HEK293T (cell line): ENCODE measurements at regions of chr10 and their contacts with region 1.

Region 1: DNA sequence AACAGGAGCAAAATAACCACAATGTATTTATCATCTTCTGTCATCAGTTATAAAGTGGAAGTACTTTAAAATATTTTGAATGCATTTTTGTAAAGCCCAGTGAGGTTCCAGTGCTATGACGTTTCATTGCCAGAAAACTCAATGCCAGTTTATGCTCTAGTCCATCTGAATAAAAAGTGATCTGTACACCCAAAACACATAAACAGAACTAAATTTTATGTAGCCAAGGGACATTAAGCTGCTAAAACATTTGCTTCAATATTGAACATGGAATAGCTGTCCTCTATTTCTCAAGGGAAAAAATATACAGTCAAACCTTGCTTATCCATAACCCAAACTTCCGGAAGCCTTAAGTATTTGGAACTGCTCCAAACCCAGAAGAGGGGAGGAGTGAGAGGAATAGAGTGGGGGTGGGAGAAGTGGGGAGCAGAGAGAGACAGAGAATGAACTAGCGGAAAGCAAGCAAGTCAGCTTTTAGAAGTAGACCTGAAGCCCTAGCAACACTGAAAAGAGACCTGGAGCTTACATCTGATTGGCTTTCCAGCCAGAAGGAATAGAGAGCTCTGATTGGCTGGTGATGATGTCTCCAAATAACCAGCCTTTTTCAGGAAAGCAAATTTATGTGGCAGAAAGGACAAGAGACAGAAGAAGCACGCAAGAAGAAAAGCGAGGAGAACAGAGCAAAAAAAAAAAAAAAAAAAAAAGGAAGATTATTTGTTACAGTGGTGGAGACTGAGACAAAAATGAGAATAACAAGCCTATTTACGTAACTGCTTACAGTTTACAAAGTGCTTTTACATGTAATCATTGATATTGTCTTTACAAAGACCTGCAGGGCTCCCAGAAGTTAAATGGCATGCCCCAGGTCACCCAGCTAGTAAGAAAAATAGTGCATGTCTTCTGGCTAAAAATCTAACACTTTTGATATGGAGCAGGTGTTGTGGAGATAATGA is 196.0 kb downstream of the RNLS start:
- DNase-seq: peak; percentile 70

Region 2: GRCh38 chr10:87887548-87888289 is 499.4 kb before region 1 on chr10:
- CTCF ChIA-PET with region 1: interaction called, 14 read pairs
- POLR2A ChIA-PET with region 1: no interaction called
- DNase-seq: no peak

Region 3: DNA sequence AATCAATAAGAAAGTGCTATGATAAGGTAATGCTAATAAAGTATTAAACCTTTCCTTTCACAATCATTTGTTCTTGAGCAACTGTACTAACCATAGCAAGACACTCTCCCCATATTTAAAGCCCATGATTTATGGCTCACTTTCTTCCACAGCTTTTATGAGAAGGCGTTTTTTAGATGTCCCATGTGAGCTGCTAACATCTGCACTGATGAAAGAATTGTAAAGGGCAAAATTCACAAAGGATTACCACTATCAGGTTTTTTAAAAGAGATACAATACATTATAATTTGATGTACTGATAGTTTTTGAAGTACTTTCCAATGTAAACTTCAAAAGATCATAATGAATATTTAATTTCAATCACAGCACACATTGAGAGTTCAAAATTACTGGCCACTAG is 120.3 kb after region 1 on chr10:
- CTCF ChIA-PET with region 1: no interaction called
- POLR2A ChIA-PET with region 1: no interaction called
- DNase-seq: no peak